K562 (cell line): ENCODE measurements at regions of chr10 and their contacts with region 1.

Region 1: GRCh38 chr10:116287906-116288501 is 15.0 kb upstream of the GFRA1 start:
- DNase-seq: peak in 1 of 4 experiments; percentile 16
- ATAC-seq: no peak
- H3K4me3 ChIP-seq: no peak overlapping the region
- H3K27ac ChIP-seq: no peak overlapping the region
- H3K4me1 ChIP-seq: no peaks in the 10 kb centered on the region
- H3K27me3 ChIP-seq: no peaks in the 10 kb centered on the region
- CTCF ChIP-seq: peak in 2 of 3 experiments; percentile 40 to 54; a peak in 3 of 6 replicates
- EP300 ChIP-seq: no peak
- POLR2A ChIP-seq: no peak
- RAD21 ChIP-seq: peak; percentile 31 to 49; a peak in 3 of 4 replicates

Region 2: DNA sequence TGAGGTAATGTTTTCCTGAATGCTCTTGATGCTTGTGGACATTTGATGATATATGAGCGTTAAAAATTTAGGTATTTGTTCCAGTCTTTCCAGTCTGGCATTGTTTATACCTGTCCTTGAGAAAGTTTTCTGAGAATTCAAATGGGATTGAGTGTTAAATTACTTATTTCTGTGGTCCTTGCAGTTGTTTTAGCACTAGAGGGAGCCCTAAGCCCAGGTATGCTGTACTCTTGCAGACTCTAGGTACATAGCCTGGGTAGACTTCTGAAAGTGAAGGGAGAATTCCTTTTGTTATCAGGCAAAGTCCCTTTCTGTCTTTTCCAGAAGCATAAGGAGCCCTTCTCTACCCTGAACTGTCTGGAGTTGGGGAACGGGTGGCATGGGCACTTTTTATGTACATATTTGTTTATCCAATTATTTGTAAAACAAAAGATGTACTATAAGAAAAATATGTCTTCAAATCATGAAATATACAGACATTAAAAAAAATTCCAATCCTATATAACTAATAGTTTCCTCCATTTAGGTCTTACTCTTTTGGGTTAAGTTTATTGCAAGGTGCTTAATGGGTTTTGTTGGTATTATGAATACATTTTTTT is 932.7 kb before region 1 on chr10:
- CTCF ChIA-PET with region 1: no interaction called
- POLR2A ChIA-PET with region 1: no interaction called
- in situ Hi-C with region 1: no loop called
- intact Hi-C with region 1: loop called (anchors 5 kb)
- DNase-seq: peak; percentile 4 to 40 (median 12)
- ATAC-seq: no peak
- H3K4me3 ChIP-seq: no peak overlapping the region
- H3K27ac ChIP-seq: no peak overlapping the region
- H3K4me1 ChIP-seq: no peaks in the 10 kb centered on the region
- H3K27me3 ChIP-seq: no peaks in the 10 kb centered on the region
- CTCF ChIP-seq: peak; percentile 19 to 39 (median 22); a peak in 3 of 6 replicates
- EP300 ChIP-seq: no peak
- POLR2A ChIP-seq: no peak
- RAD21 ChIP-seq: peak; percentile 48 to 55

Region 3: GRCh38 chr10:116490028-116490662 is 202.1 kb after region 1 on chr10:
- CTCF ChIA-PET with region 1: no interaction called
- POLR2A ChIA-PET with region 1: no interaction called
- in situ Hi-C with region 1: no loop called
- intact Hi-C with region 1: no loop called
- DNase-seq: peak; percentile 10 to 26 (median 16)
- ATAC-seq: no peak
- H3K4me3 ChIP-seq: no peak overlapping the region
- H3K27ac ChIP-seq: no peak overlapping the region
- H3K4me1 ChIP-seq: no peaks in the 10 kb centered on the region
- H3K27me3 ChIP-seq: no peaks in the 10 kb centered on the region
- CTCF ChIP-seq: peak; percentile 18 to 57 (median 22); a peak in 3 of 6 replicates
- EP300 ChIP-seq: no peak
- POLR2A ChIP-seq: no peak
- RAD21 ChIP-seq: peak; percentile 32 to 37

Region 4: GRCh38 chr10:116646502-116646901 is 358.5 kb after region 1 on chr10:
- CTCF ChIA-PET with region 1: no interaction called
- POLR2A ChIA-PET with region 1: no interaction called
- in situ Hi-C with region 1: no loop called
- intact Hi-C with region 1: no loop called
- DNase-seq: no peak
- ATAC-seq: no peak
- H3K4me3 ChIP-seq: no peak overlapping the region
- H3K27ac ChIP-seq: no peak overlapping the region
- H3K4me1 ChIP-seq: no peaks in the 10 kb centered on the region
- H3K27me3 ChIP-seq: no peaks in the 10 kb centered on the region
- CTCF ChIP-seq: no peak
- EP300 ChIP-seq: no peak
- POLR2A ChIP-seq: no peak
- RAD21 ChIP-seq: no peak

Region 5: GRCh38 chr10:117047947-117048346 is 759.9 kb after region 1 on chr10:
- CTCF ChIA-PET with region 1: no interaction called
- POLR2A ChIA-PET with region 1: no interaction called
- in situ Hi-C with region 1: no loop called
- intact Hi-C with region 1: no loop called
- DNase-seq: no peak
- ATAC-seq: no peak
- H3K4me3 ChIP-seq: no peak overlapping the region
- H3K27ac ChIP-seq: no peak overlapping the region
- H3K4me1 ChIP-seq: no peaks in the 10 kb centered on the region
- H3K27me3 ChIP-seq: no peaks in the 10 kb centered on the region
- CTCF ChIP-seq: no peak
- EP300 ChIP-seq: no peak
- POLR2A ChIP-seq: no peak
- RAD21 ChIP-seq: no peak